G401 (cell line): ENCODE measurements at regions of chr7 and their contacts with region 1.

Region 1: DNA sequence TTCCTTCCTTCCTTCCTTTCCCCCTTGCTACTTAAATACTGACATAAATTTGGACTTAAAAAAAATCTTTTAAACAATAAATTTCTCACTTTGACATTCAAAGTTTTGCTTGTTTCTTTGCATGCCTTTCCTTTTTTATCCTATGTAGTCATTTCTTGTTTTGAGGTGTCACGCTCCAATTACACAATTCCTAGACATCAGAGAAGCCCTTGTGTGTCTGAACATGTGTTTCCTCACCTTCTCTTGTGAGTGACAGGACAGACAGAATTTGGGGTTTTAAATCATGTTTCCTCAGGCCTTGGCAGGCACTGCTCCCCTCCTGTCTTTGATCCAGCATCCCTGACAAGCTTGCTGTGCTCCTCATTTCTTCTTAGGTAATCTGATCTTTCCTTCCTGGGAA is 91.3 kb downstream of the CYTH3 start:
- DNase-seq: no peak

Region 2: DNA sequence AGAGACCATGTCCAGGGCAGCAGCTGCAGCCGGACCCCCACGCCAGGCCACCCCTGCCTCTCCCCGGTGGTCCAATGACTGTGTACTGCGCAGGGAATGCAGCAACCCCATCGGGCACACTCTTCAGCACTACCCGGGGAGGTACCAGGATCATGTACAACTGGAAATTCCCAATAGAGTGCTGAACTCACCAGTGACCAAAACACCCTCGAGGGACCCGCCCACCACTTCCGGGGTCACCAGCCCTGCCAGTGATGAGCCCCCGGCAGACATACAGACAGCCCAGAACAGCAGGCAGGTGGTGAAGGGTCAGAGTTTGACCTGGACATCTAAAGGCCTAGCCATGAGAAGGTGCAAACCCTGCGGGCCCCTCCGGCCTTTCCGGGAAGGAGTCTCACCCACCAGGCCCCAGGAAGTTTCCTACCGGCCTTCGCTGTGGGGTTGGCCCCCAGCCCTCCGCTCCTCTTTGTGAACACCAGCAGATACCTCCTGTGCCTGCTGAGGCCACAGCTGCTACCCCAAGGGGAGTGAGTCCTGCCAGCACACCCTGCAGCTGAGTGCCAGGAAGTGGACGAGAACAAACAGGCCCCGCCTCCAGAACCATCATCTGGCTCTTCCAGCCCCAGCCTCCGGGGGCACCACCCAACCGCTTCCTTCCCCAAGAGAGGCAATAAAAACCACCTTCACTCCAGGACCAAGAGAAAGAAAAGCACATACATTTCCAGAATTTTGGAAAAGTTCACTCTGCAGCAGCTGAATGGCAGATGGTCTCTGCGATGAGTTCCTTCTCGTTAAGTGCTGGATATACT is 154.9 kb before region 1 on chr7:
- in situ Hi-C with region 1: loop called (anchors 10 kb)
- DNase-seq: no peak

Region 3: DNA sequence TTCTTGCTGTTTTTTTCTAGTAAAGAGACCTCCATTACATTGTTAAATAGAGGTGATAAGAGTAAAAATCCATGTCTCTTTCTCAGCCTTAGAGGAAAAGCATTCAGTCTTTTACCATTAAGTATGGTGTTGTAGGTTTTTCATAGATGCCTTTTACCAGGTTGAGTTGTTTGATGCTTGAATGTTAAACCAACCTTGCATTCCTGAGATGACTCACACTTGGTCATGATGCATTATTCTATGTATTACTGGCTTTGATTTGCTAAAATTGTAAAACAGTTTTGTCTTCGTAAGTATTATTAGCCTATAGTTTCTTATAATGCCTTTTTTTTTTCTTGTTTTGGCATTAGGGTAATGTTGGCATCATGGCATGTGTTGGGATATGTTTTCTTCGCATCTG is 60.0 kb before region 1 on chr7:
- in situ Hi-C with region 1: no loop called
- DNase-seq: no peak

Region 4: DNA sequence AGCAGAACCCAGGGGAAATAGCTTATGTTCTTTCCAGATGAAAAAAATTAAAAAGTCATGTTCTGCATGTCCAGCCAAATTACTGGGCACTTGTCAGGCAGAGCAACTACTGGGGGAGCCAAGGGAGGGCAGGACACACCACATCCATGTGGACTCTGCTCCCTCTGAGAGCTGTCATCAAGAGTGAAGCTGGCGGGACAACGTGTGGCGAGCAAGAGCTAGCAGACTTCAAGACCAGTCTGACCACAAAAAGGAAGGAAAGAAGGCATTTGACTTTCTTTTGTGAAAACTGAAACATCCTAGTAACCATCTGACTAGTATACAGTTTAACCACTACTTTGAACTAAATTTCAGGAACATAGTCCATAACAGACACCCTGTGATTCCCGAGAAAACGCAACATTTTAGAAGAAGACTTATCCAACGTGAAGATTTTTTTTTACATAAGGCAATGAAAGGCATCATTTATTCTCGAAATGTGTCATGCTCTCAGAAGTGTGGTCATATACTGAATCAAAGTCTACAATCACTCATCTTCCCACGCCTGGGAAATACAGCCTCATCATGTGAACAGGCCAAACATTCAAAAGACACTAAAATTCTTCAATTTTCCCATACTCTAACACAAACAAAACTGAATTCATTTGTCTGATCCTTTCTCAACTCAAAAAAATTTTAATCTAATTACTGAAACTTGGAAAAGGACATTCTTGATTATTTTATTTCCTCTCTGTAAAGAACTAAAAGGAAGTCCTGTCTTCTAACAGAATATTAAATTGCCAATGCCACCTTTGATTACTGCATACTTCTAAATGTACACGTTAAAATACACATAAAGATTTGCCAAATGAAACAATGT is 75.8 kb after region 1 on chr7:
- in situ Hi-C with region 1: no loop called
- DNase-seq: no peak